Left ventricle myocardium inferior (tissue), 1 donor: ENCODE measurements at regions of chr15 and their contacts with region 1.

Region 1: GRCh38 chr15:25693321-25694237 is 169.5 kb downstream of the ATP10A start:
- DNase-seq: peak; percentile 36
- H3K4me3 ChIP-seq: no peak overlapping the region
- H3K27ac ChIP-seq: no peak overlapping the region
- H3K4me1 ChIP-seq: peaks cover 13% of the 10 kb centered on the region
- H3K27me3 ChIP-seq: peaks cover 13% of the 10 kb centered on the region
- CTCF ChIP-seq: peak; percentile 74

Region 2: GRCh38 chr15:25508369-25509002 is 185.1 kb before region 1 on chr15:
- intact Hi-C with region 1: loop called (anchors 10 kb)
- DNase-seq: no peak
- H3K4me3 ChIP-seq: no peak overlapping the region
- H3K27ac ChIP-seq: no peak overlapping the region
- H3K4me1 ChIP-seq: no peaks in the 10 kb centered on the region
- H3K27me3 ChIP-seq: no peaks in the 10 kb centered on the region
- CTCF ChIP-seq: peak; percentile 72